Activated CD4-positive, alpha-beta memory T cell treated with anti-CD3 and anti-CD28 coated beads, Interleukin-2, amount 10 ng/mL, durations not matched to agents 7 days and 5 days (primary cell): ENCODE measurements at regions of chr9 and their contacts with region 1.

Region 1: DNA sequence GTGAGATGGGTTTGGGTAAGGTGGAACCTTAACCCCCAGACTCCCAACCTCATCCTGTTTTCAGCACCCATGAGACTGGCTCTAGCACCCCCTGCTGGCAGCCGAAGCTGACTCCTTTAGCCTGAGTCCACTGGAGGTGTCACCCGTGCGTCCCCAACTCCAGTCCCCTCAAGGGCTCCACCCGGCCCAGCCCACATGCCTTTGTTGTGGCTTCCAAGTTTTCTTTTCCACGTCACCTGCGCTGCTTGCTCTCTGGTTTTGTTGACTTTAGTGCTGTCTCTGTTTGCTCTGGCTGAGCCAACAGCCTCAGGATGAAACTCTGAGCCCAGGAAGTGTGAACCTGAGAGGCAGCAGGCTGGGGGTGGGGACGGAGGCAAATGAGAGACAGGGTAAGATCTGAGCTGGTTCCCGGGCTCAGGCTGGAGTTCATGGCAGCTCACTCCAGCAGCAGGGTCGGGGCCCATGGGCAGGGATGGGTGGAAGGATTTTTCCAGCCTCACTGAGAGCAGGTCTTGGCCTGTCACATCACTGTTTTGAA is 13.2 kb upstream of the AQP7 start:
- DNase-seq: peak; percentile 96
- H3K4me3 Mint-ChIP-seq: peak overlapping the region; percentile 49
- H3K27ac Mint-ChIP-seq: peak overlapping the region; percentile 95
- H3K4me1 Mint-ChIP-seq: peaks cover 60% of the 10 kb centered on the region
- H3K27me3 Mint-ChIP-seq: no peaks in the 10 kb centered on the region

Region 2: GRCh38 chr9:33374634-33375213 is 40.8 kb before region 1 on chr9:
- CTCF ChIA-PET with region 1: interaction called, 31 read pairs
- POLR2A ChIA-PET with region 1: interaction called, 5 read pairs
- DNase-seq: peak; percentile 70
- H3K4me3 Mint-ChIP-seq: no peak overlapping the region
- H3K27ac Mint-ChIP-seq: peak overlapping the region; percentile 33
- H3K4me1 Mint-ChIP-seq: peaks cover 14% of the 10 kb centered on the region
- H3K27me3 Mint-ChIP-seq: no peaks in the 10 kb centered on the region

Region 3: DNA sequence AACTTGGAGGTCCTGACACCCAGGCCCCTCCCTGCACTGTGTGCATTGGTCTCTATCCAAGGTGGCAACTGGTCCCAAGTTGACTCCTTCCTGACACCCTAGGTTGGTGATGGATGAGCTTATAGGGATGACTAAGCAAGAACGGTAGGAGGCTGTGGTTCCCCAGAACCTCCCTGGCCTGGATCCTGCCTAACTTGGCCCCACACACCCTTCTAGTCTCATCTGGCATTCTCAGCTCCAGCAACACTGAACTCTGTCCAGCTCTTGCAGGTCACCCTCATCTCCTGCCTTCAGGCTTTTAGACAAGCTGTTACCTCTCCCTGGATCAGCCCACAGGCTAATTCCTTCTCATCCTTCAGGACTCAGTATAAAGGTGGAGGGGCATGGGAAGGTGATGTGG is 15.4 kb after region 1 on chr9:
- CTCF ChIA-PET with region 1: interaction called, 19 read pairs
- POLR2A ChIA-PET with region 1: interaction called, 3 read pairs
- DNase-seq: no peak
- H3K4me3 Mint-ChIP-seq: no peak overlapping the region
- H3K27ac Mint-ChIP-seq: no peak overlapping the region
- H3K4me1 Mint-ChIP-seq: peaks cover 20% of the 10 kb centered on the region
- H3K27me3 Mint-ChIP-seq: no peaks in the 10 kb centered on the region

Region 4: GRCh38 chr9:33446946-33447798 is 31.6 kb after region 1 on chr9 and contains the start of gene AQP3:
- CTCF ChIA-PET with region 1: interaction called, 278 read pairs
- POLR2A ChIA-PET with region 1: interaction called, 75 read pairs
- DNase-seq: peak; percentile 85
- H3K4me3 Mint-ChIP-seq: peak within 1 kb of the TSS; percentile 84
- H3K27ac Mint-ChIP-seq: peak within 1 kb of the TSS; percentile 94
- H3K4me1 Mint-ChIP-seq: peaks cover 64% of the 10 kb centered on the region
- H3K27me3 Mint-ChIP-seq: no peaks in the 10 kb centered on the region
- total RNA-seq, gene AQP3: 162 to 167 TPM

Region 5: GRCh38 chr9:33458444-33458843 is 42.9 kb after region 1 on chr9:
- CTCF ChIA-PET with region 1: interaction called, 278 read pairs
- POLR2A ChIA-PET with region 1: interaction called, 35 read pairs
- DNase-seq: peak; percentile 58
- H3K4me3 Mint-ChIP-seq: no peak overlapping the region
- H3K27ac Mint-ChIP-seq: peak overlapping the region; percentile 81
- H3K4me1 Mint-ChIP-seq: peaks cover 54% of the 10 kb centered on the region
- H3K27me3 Mint-ChIP-seq: no peaks in the 10 kb centered on the region

Region 6: DNA sequence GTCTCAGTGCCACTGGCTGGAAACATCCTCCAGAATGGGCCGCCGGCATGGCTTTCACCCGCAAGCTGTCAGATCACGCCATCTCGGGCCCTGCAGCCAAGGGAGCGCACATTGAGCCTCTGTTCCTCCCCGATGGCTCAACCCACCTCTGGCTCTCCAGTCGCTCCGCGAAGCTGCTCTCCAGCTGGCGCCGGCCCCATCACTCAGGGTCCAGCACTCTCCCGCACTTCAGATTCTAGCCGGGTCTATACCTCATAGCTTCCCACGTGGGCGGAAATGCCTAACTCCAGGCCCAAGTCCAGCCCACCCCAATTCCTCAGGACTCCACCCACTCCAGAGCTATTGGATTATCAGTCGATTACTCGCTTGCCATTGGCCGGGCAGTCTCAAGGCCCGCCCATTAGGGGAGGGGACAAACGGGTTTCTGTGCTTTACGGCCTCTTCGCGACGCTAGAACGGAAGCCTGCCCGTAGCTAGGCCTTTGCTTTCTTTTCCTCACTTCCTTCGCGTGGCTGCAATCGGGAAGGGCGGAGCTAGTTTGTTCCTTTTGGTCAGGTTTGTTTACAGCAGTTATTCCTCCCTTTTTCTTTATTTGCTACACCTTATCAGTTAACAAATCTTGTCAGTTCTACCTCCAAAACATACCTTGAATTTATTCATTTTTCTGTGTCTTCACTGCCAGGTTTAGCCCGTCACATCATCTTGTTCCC is 58.2 kb after region 1 on chr9 and contains the start of gene NOL6:
- CTCF ChIA-PET with region 1: interaction called, 73 read pairs
- POLR2A ChIA-PET with region 1: interaction called, 31 read pairs
- DNase-seq: peak; percentile 98
- H3K4me3 Mint-ChIP-seq: peak within 1 kb of the TSS; percentile 92
- H3K27ac Mint-ChIP-seq: peak within 1 kb of the TSS; percentile 85
- H3K4me1 Mint-ChIP-seq: peaks cover 30% of the 10 kb centered on the region
- H3K27me3 Mint-ChIP-seq: no peaks in the 10 kb centered on the region
- total RNA-seq, gene NOL6: 21.6 to 22.4 TPM